ENCODE measurements at regions of chr12 and their contacts with region 1.

Region 1: DNA sequence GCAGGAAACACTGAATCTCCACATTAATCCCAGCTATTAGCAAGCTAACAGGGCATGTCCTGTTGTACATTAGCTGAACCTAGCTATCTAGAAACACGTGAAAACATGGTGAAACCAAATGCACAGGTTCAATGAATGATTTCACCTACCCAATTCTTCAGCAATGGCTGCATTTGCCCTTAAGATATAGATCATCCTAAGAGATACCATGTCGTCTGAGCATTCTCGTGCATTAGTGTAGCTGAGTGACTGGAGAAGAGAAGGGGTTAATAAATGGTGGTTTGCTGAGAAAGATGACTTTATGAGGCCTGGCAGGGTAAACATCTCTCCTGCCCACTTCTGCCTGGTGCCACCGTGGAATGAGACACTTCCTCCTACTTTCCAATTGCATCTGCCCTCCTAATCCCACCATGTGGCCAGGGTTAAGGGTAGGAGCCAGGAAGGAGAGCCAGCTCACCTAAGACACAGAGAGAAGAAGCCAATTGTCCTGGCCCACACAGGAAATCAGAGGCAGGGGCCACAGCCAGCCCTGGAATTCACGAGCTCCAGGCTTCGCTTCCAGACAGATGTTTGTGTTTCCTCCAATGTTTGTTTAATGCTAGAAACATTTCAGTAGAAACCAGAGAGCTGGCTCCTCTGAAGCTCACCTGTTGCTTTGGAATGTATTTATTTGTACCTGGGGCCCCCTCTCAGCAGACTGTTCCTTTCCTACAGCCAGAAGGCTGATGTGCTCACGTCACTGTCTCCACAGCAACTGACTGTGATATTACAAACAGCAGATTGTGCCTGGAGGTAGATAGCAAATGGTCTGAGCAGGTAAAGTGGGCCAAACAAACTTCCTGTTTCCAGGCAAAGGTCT is 126.0 kb upstream of the PARP11 start:
- DNase-seq: no peak
- H3K4me3 ChIP-seq: no peak overlapping the region
- H3K27ac ChIP-seq: no peak overlapping the region
- H3K4me1 ChIP-seq: no peaks in the 10 kb centered on the region
- H3K27me3 ChIP-seq: no peaks in the 10 kb centered on the region
- CTCF ChIP-seq: no peak

Region 2: DNA sequence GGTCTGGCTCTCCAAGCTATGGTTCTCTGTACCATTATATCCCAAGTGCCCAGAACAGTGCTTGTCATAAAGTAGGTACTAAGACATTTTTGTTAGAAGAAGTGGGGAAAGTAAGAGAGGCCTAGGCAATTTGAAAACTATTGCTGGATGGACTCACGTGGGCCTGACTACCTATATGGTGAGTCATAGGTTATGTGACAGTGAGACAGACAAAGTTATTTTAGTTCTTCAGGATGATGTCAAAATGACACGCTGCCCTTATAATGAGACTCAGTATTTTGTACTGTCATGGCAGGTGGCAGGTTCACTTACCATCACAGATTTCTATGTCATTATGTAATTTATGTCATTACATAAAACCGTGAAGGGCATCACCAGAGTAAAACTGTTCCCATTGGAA is 179.1 kb before region 1 on chr12:
- intact Hi-C with region 1: no loop called
- DNase-seq: no peak
- H3K4me3 ChIP-seq: no peak overlapping the region
- H3K27ac ChIP-seq: no peak overlapping the region
- H3K4me1 ChIP-seq: no peaks in the 10 kb centered on the region
- H3K27me3 ChIP-seq: no peaks in the 10 kb centered on the region
- CTCF ChIP-seq: no peak

Region 3: GRCh38 chr12:3885277-3886094 is 113.7 kb before region 1 on chr12:
- intact Hi-C with region 1: loop called (anchors 5 kb)
- DNase-seq: peak in 1 of 2 donors; percentile 67
- H3K4me3 ChIP-seq: peak overlapping the region; percentile 45 to 58
- H3K27ac ChIP-seq: peak overlapping the region; percentile 71 to 81
- H3K4me1 ChIP-seq: peaks cover 0 to 2% of the 10 kb centered on the region in 2 donors
- H3K27me3 ChIP-seq: no peaks in the 10 kb centered on the region
- CTCF ChIP-seq: peak; percentile 77 to 86 (median 80)

Region 4: GRCh38 chr12:3951380-3952135 is 47.6 kb before region 1 on chr12:
- intact Hi-C with region 1: no loop called
- DNase-seq: no peak
- H3K4me3 ChIP-seq: no peak overlapping the region
- H3K27ac ChIP-seq: no peak overlapping the region
- H3K4me1 ChIP-seq: no peaks in the 10 kb centered on the region
- H3K27me3 ChIP-seq: no peaks in the 10 kb centered on the region
- CTCF ChIP-seq: no peak

Region 5: DNA sequence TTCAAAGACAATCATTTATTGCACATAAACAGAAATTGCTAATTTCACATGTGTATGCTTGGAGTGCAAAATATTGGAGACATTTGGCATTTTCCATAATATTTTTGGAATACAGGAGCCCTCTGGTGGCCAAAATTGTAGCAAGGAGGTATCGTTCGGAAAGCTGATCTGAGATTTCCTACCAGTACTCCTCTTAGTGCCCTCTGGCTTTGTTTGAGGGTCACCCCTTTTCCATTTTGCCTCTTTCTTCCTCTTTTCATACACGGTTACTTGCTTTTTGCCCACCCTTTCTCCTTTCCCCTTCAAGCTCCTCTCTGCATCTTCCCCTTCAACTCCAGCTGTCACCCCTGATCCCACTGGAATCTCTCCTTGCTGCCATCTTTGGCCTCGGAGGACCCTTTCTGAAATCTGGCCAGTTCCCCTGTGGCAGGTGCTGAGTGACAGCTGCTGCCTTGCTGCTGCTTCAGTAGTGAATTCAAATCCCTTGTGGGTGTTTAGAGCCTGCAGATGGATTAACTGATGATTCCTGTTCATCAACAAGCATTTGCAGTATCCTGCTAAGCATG is 38.6 kb after region 1 on chr12:
- intact Hi-C with region 1: loop called (anchors 1 kb)
- DNase-seq: no peak
- H3K4me3 ChIP-seq: no peak overlapping the region
- H3K27ac ChIP-seq: no peak overlapping the region
- H3K4me1 ChIP-seq: no peaks in the 10 kb centered on the region
- H3K27me3 ChIP-seq: no peaks in the 10 kb centered on the region
- CTCF ChIP-seq: peak; percentile 59 to 77 (median 63)

Region 6: DNA sequence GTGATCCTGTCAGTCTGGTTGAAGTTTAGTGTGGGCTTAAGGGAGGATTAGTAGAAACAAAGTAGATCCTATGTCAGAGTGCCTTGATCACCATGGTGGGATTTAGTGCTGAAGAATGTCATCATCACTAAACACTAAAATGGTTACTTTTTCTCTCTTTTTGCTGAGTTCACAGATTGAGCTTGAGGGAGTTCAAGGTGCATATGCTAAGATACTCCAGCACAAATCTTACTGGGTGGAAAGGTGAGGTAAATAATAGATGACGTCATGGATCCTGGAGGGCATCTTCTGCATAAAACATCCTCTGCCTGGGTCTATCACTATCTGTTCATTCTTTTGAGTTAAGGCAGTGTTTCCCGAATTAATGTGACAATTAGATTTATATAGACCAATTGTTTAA is 725.9 kb after region 1 on chr12:
- intact Hi-C with region 1: no loop called
- DNase-seq: no peak
- H3K4me3 ChIP-seq: no peak overlapping the region
- H3K27ac ChIP-seq: no peak overlapping the region
- H3K4me1 ChIP-seq: no peaks in the 10 kb centered on the region
- H3K27me3 ChIP-seq: no peaks in the 10 kb centered on the region
- CTCF ChIP-seq: no peak